ENCODE measurements at regions of chr3 and their contacts with region 1.

Region 1: GRCh38 chr3:94062431-94063404 is at the starts of genes DHFR2 and NSUN3:
- DNase-seq: peak; percentile 81 to 97
- H3K4me3 ChIP-seq: peak within 1 kb of the TSS; percentile 73 to 74
- H3K27ac ChIP-seq: peak within 1 kb of the TSS; percentile 93
- H3K4me1 ChIP-seq: peaks cover 0 to 15% of the 10 kb centered on the region in 2 donors
- H3K27me3 ChIP-seq: no peaks in the 10 kb centered on the region
- CTCF ChIP-seq: no peak
- total RNA-seq, gene DHFR2: 1.1 TPM
- total RNA-seq, gene NSUN3: 17.1 TPM

Region 2: DNA sequence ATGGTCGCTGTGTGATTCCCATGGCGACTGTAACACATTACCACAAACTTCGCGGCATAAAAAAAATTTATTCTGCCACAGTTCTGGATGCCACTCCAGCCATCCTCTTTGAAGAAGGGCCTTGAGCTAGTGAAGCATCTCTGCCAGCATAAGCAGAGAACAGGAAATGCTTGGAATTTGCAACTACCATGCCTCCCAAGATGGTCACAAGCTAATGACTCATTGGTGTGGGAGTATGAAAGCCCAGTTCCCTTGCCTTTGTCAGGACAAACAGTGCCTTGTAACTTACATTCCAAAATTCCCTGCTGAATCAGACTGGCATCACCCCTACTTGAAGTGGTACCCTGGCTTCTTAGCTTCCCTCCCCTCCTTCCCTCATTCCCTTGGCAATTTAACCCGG is 218.7 kb before region 1 on chr3:
- intact Hi-C with region 1: loop called (anchors 5 kb)
- DNase-seq: peak in 1 of 2 donors; percentile 79
- H3K4me3 ChIP-seq: no peak overlapping the region
- H3K27ac ChIP-seq: peak overlapping the region; percentile 49 to 50
- H3K4me1 ChIP-seq: peaks cover 0 to 5% of the 10 kb centered on the region in 2 donors
- H3K27me3 ChIP-seq: no peaks in the 10 kb centered on the region
- CTCF ChIP-seq: no peak

Region 3: GRCh38 chr3:93906245-93906644 is 156.5 kb before region 1 on chr3:
- intact Hi-C with region 1: loop called (anchors 10 kb)
- DNase-seq: no peak
- H3K4me3 ChIP-seq: no peak overlapping the region
- H3K27ac ChIP-seq: no peak overlapping the region
- H3K4me1 ChIP-seq: no peaks in the 10 kb centered on the region
- H3K27me3 ChIP-seq: no peaks in the 10 kb centered on the region
- CTCF ChIP-seq: no peak

Region 4: GRCh38 chr3:93979833-93980676 is 82.7 kb before region 1 on chr3 and contains the start of gene ARL13B:
- intact Hi-C with region 1: loop called (anchors 1 kb)
- DNase-seq: peak; percentile 96 to 99
- H3K4me3 ChIP-seq: peak within 1 kb of the TSS; percentile 65 to 92
- H3K27ac ChIP-seq: peak within 1 kb of the TSS; percentile 91 to 93
- H3K4me1 ChIP-seq: peaks cover 0 to 9% of the 10 kb centered on the region in 2 donors
- H3K27me3 ChIP-seq: no peaks in the 10 kb centered on the region
- CTCF ChIP-seq: no peak
- total RNA-seq, gene ARL13B: 4.5 TPM

Region 5: DNA sequence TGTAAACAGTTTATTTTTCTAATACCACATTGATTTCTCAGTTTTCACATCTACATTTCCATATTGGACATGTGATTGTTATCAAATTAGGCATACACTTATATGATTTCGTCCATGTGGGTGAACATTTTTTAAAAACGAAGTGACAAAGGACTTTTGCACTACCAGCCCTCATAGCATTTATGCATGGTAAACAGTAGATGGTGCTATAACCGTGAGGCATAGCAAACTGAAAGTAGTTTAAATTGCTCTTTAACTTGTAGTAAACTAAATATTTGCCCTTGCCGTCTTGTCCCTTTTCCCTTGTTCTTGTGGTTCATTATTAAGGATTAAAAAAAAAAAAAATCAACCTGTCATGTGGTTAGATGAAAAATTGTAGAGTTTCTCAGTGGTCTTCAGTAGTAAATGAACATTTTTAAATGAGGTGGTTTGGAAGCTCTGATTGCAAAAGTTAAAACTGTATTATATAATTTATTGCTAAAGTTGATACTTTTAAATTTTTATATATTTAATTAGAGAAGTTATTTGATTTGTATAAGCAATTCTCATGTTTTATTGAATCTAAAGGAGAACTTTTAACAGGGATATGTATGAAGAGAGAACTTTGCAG is 58.3 kb before region 1 on chr3:
- intact Hi-C with region 1: loop called (anchors 2 kb)
- DNase-seq: no peak
- H3K4me3 ChIP-seq: peak overlapping the region; percentile 34 to 52
- H3K27ac ChIP-seq: no peak overlapping the region
- H3K4me1 ChIP-seq: peaks cover 0 to 12% of the 10 kb centered on the region in 2 donors
- H3K27me3 ChIP-seq: no peaks in the 10 kb centered on the region
- CTCF ChIP-seq: peak; percentile 53 to 83 (median 72)

Measured in ascending aorta (tissue), 2 donors.